ENCODE measurements at regions of chr2 and their contacts with region 1.

Region 1: DNA sequence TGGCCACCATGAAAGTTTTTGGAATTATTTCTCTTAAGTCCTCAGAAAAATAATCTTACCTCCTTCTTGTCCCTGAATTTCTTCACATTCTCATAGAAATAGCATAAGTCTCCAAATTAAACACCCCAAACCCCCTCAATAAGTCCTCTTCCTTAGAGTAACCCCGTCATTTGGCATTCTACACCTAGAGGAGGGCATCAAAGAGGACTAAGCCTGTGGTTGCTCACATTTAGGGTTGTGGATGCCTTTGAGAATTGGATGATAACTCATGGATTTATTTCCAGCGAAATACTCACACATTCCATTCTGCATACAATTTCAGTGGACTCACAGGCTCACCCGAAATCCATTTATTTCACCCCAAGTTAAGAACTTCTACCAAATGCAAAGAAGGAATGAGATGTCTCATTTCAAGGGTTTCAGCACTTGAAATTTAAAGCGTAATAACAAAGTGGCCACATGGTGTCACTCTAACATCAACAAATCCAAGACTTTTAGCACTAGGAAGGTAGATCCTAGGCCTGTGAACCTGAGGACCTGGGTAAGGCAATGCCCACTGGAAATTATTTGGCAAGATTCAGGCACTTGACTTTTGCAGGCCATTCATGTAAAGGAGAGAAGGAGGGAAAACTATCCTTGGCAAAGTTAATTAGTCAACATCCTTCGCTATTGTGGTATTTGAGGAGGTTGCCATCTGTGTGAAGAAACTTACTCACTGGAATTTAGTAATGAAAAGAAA is 24.6 kb downstream of the DYTN start:
- DNase-seq: peak; percentile 59
- H3K4me3 ChIP-seq: no peak overlapping the region
- H3K27ac ChIP-seq: no peak overlapping the region
- H3K4me1 ChIP-seq: peaks cover 6% of the 10 kb centered on the region
- CTCF ChIP-seq: peak; percentile 87

Region 2: GRCh38 chr2:206780671-206781070 is 87.1 kb after region 1 on chr2:
- CTCF ChIA-PET with region 1: no interaction called
- POLR2A ChIA-PET with region 1: no interaction called
- intact Hi-C with region 1: loop called (anchors 2 kb)
- DNase-seq: no peak
- H3K4me3 ChIP-seq: no peak overlapping the region
- H3K27ac ChIP-seq: no peak overlapping the region
- H3K4me1 ChIP-seq: no peaks in the 10 kb centered on the region
- CTCF ChIP-seq: no peak

Region 3: DNA sequence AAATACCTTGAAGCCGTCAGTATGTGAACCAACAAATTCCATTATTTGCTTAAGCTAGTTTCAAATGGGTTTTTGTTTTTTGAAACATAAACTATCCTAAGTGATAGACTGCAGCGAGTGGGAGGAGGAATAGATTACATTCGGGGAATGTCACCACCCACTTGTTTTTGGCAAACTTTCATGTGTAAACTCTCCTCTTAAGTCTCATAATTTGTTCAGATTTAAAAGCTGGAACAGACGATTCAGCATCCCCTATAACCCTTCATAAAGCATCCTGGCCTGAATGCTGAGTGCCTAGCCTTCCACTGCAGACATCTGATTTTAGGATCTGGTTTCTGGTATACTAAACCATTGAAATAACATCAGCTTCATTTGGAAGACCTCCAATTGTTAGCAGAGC is 296.8 kb after region 1 on chr2:
- CTCF ChIA-PET with region 1: no interaction called
- POLR2A ChIA-PET with region 1: interaction called, 4 read pairs
- intact Hi-C with region 1: loop called (anchors 2 kb)
- DNase-seq: no peak
- H3K4me3 ChIP-seq: no peak overlapping the region
- H3K27ac ChIP-seq: no peak overlapping the region
- H3K4me1 ChIP-seq: no peaks in the 10 kb centered on the region
- CTCF ChIP-seq: no peak

Region 4: GRCh38 chr2:207008105-207008990 is 314.8 kb after region 1 on chr2:
- CTCF ChIA-PET with region 1: no interaction called
- POLR2A ChIA-PET with region 1: no interaction called
- intact Hi-C with region 1: no loop called
- DNase-seq: no peak
- H3K4me3 ChIP-seq: no peak overlapping the region
- H3K27ac ChIP-seq: no peak overlapping the region
- H3K4me1 ChIP-seq: no peaks in the 10 kb centered on the region
- CTCF ChIP-seq: 0 out of 2 replicates have a peak, but pooled peaks have one; percentile 34

Region 5: GRCh38 chr2:207473049-207473930 is 779.7 kb after region 1 on chr2:
- CTCF ChIA-PET with region 1: no interaction called
- POLR2A ChIA-PET with region 1: no interaction called
- intact Hi-C with region 1: loop called (anchors 1 kb)
- DNase-seq: no peak
- H3K4me3 ChIP-seq: no peak overlapping the region
- H3K27ac ChIP-seq: no peak overlapping the region
- H3K4me1 ChIP-seq: no peaks in the 10 kb centered on the region
- CTCF ChIP-seq: peak; percentile 31; the same call in 1 of the 2 replicates

Measured in OCI-LY7 (cell line).